Transverse colon (tissue), 4 donors: ENCODE measurements at regions of chr20 and their contacts with region 1.

Region 1: GRCh38 chr20:2172305-2173175 is 70.9 kb downstream of the STK35 start:
- DNase-seq: peak; percentile 68
- H3K4me3 ChIP-seq: no peak overlapping the region
- H3K27ac ChIP-seq: no peak overlapping the region
- H3K4me1 ChIP-seq: no peaks in the 10 kb centered on the region
- H3K27me3 ChIP-seq: peaks cover 13% of the 10 kb centered on the region
- CTCF ChIP-seq: peak; percentile 83 to 90 (median 87)
- EP300 ChIP-seq: no peak
- POLR2A ChIP-seq: no peak

Region 2: GRCh38 chr20:1764136-1765033 is 408.2 kb before region 1 on chr20:
- in situ Hi-C with region 1: loop called in 2 of 4 experiments (anchors 10 to 25 kb)
- intact Hi-C with region 1: loop called (anchors 5 kb)
- DNase-seq: peak; percentile 80
- H3K4me3 ChIP-seq: no peak overlapping the region
- H3K27ac ChIP-seq: no peak overlapping the region
- H3K4me1 ChIP-seq: peaks cover 0 to 3% (median 0%) of the 10 kb centered on the region in 4 donors
- H3K27me3 ChIP-seq: peaks cover 6% of the 10 kb centered on the region
- CTCF ChIP-seq: peak; percentile 49 to 74 (median 71)
- EP300 ChIP-seq: no peak
- POLR2A ChIP-seq: no peak

Region 3: DNA sequence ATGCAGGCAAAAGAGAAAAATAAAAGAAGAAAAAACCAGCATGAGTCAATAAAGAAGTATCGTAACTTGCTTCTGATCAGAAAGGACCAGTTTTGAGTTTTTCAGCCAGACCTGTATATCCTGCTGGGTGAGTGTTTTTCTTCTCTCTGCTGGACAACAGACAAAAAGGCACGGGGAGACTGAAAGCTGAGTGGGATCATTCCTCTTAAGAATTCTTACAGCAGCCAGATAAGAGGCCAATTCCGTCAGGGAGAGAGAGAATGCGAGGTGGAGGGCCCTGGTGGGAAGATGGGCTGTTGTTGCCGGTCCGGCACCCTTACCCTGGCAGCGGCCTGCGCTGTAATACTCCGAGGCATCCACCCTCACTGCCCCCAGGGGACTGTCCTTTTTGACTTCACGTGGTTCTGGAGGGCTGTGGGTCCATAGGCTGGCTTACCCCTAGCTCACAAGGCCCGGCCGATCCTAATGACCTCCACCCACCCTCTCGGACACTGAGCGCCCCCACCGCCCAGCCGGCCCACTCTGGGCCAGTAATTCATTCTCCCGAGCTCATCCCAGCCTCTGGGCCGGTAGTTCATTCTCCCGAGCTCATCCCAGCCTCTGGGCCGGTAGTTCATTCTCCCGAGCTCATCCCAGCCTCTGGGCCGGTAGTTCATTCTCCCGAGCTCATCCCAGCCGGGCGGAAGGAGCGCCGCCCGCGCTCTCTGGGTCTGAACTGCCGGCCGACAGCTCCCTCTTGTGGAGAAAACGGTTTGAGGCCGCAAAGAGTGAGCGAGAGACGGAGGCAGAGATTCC is 395.7 kb before region 1 on chr20:
- in situ Hi-C with region 1: loop called in 3 of 4 experiments (anchors 10 to 25 kb)
- intact Hi-C with region 1: no loop called
- DNase-seq: peak; percentile 88
- H3K4me3 ChIP-seq: peak overlapping the region; percentile 15 to 54 (median 52)
- H3K27ac ChIP-seq: peak overlapping the region; percentile 14 to 74 (median 46)
- H3K4me1 ChIP-seq: peaks cover 6 to 13% (median 10%) of the 10 kb centered on the region in 4 donors
- H3K27me3 ChIP-seq: no peaks in the 10 kb centered on the region
- CTCF ChIP-seq: peak; percentile 80 to 89 (median 81)
- EP300 ChIP-seq: no peak
- POLR2A ChIP-seq: no peak

Region 4: GRCh38 chr20:1965520-1966351 is 206.8 kb before region 1 on chr20:
- in situ Hi-C with region 1: loop called (anchors 5 kb)
- intact Hi-C with region 1: loop called (anchors 2 kb)
- DNase-seq: peak; percentile 75
- H3K4me3 ChIP-seq: no peak overlapping the region
- H3K27ac ChIP-seq: no peak overlapping the region
- H3K4me1 ChIP-seq: peaks cover 0 to 10% (median 3%) of the 10 kb centered on the region in 4 donors
- H3K27me3 ChIP-seq: peaks cover 16% of the 10 kb centered on the region
- CTCF ChIP-seq: peak; percentile 86 to 93 (median 92)
- EP300 ChIP-seq: no peak
- POLR2A ChIP-seq: no peak

Region 5: DNA sequence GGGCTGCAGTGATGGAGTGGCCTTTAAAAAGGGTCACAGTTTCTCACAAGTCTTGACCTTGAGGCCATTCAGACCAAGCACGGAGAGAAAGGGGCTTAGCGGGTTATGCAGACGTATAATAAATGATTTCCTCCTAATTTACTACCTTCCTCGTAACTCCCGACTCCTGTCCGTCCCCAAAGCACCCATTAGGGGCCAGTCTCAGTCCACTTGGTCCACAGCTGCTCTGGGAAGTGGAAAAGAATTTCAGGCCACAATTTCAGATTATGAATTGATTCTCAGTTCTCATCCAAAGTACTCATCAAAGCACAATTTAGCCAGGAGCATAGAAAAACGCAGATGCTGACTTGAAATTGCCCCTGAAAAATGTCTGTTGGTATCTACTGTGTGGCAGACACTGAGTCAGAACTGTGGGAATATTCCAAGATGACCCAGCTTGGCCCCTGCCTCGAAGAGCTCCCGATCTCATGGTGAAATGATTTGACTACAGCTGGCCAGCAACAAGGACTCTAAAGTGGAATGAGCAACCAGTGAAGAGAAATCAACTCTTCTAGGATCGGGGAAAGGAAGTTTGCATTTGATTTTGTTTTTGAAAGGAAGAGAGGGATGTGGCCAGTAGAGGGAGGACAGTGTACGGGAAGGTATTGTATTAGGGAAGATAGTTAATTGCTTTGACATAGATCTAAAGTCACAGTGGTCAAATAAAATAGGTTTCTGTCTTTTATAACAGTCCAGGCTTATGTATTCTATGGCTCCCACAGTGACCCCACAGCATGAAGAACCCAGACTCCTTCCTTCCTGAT is 86.2 kb before region 1 on chr20:
- in situ Hi-C with region 1: no loop called
- intact Hi-C with region 1: loop called (anchors 10 kb)
- DNase-seq: no peak
- H3K4me3 ChIP-seq: no peak overlapping the region
- H3K27ac ChIP-seq: no peak overlapping the region
- H3K4me1 ChIP-seq: no peaks in the 10 kb centered on the region
- H3K27me3 ChIP-seq: peaks cover 59% of the 10 kb centered on the region
- CTCF ChIP-seq: peak in 1 of 5 experiments; percentile 3
- EP300 ChIP-seq: no peak
- POLR2A ChIP-seq: no peak

Region 6: DNA sequence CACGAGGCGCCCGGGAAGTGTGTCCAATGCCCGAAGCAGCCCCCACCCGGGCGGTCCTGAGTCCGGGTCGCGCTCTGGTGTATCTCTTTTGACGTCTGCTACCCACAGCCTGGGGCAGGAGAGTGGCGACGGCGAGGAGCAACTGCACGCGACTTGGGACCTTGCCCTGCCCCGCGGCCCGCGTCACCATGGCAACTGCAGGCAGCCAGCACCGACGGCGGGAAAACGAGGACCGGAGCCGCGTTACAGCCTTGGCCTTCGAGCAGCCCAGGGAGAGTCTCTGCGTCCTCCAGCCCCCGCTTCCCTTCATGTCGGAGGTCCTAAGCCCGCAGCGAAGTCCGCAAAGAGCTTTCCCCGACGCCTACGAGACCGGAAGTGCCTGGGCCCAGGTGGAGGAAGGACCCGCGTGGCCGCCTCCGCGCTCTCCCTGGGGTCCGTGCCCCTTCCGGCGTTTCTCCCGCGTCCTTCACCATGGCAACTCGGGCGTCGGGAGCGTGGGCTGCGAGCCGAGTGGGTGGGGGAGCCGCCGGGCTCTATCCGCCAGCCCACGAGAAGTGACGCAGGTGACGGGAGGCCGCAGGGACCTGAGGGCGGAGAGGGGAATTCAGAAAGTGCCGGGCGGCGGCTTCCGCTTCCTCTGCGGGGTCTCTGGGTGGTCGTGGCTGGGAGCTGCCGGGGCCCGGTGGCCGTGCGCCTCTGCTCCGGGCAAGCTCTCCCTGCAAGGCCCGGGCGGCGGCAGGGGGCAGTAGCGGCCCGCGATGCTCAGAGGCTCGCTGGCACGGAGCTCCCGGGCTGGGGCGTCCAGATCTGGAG is 34.6 kb after region 1 on chr20:
- in situ Hi-C with region 1: no loop called
- intact Hi-C with region 1: no loop called
- DNase-seq: peak; percentile 81
- H3K4me3 ChIP-seq: peak overlapping the region; percentile 28 to 62 (median 44)
- H3K27ac ChIP-seq: no peak overlapping the region
- H3K4me1 ChIP-seq: peaks cover 3 to 26% (median 13%) of the 10 kb centered on the region in 4 donors
- H3K27me3 ChIP-seq: peaks cover 38% of the 10 kb centered on the region
- CTCF ChIP-seq: peak; percentile 65 to 80 (median 76)
- EP300 ChIP-seq: no peak
- POLR2A ChIP-seq: no peak